GM12878 (cell line): ENCODE measurements at regions of chr3 and their contacts with region 1.

Region 1: GRCh38 chr3:39499651-39500240 is 32.3 kb downstream of the MOBP start:
- DNase-seq: no peak
- ATAC-seq: no peak
- H3K4me3 ChIP-seq: no peak overlapping the region
- H3K27ac ChIP-seq: no peak overlapping the region
- H3K4me1 ChIP-seq: no peaks in the 10 kb centered on the region
- H3K27me3 ChIP-seq: peaks cover 0 to 14% of the 10 kb centered on the region in 2 experiments
- CTCF ChIP-seq: no peak
- EP300 ChIP-seq: no peak
- POLR2A ChIP-seq: no peak
- RAD21 ChIP-seq: no peak

Region 2: GRCh38 chr3:39166134-39166731 is 333.5 kb before region 1 on chr3:
- CTCF ChIA-PET with region 1: no interaction called
- POLR2A ChIA-PET with region 1: no interaction called
- RAD21 ChIA-PET with region 1: no interaction called
- SMC1A ChIA-PET with region 1: no interaction called
- in situ Hi-C with region 1: no loop called
- intact Hi-C with region 1: no loop called
- DNase-seq: no peak
- ATAC-seq: no peak; the same call in none of the 3 replicates
- H3K4me3 ChIP-seq: no peak overlapping the region
- H3K27ac ChIP-seq: no peak overlapping the region
- H3K4me1 ChIP-seq: no peaks in the 10 kb centered on the region
- H3K27me3 ChIP-seq: no peaks in the 10 kb centered on the region; a peak in 1 of 4 replicates
- CTCF ChIP-seq: peak in 1 of 3 experiments; percentile 27; a peak in 2 of 6 replicates
- EP300 ChIP-seq: no peak
- POLR2A ChIP-seq: no peak
- RAD21 ChIP-seq: peak; percentile 39

Region 3: GRCh38 chr3:39414421-39414907 is 85.3 kb before region 1 on chr3:
- CTCF ChIA-PET with region 1: interaction called, 13 read pairs
- POLR2A ChIA-PET with region 1: no interaction called
- RAD21 ChIA-PET with region 1: no interaction called
- SMC1A ChIA-PET with region 1: interaction called, 3 read pairs
- in situ Hi-C with region 1: no loop called
- intact Hi-C with region 1: loop called (anchors 2 kb)
- DNase-seq: no peak
- ATAC-seq: peak; percentile 8
- H3K4me3 ChIP-seq: no peak overlapping the region
- H3K27ac ChIP-seq: no peak overlapping the region
- H3K4me1 ChIP-seq: no peaks in the 10 kb centered on the region
- H3K27me3 ChIP-seq: no peaks in the 10 kb centered on the region
- CTCF ChIP-seq: no peak
- EP300 ChIP-seq: no peak
- POLR2A ChIP-seq: peak; percentile 67
- RAD21 ChIP-seq: no peak

Region 4: GRCh38 chr3:39485547-39485946 is 14.2 kb before region 1 on chr3:
- CTCF ChIA-PET with region 1: interaction called, 16 read pairs
- POLR2A ChIA-PET with region 1: no interaction called
- RAD21 ChIA-PET with region 1: no interaction called
- SMC1A ChIA-PET with region 1: no interaction called
- in situ Hi-C with region 1: no loop called
- intact Hi-C with region 1: no loop called
- DNase-seq: no peak
- ATAC-seq: no peak
- H3K4me3 ChIP-seq: no peak overlapping the region
- H3K27ac ChIP-seq: no peak overlapping the region
- H3K4me1 ChIP-seq: no peaks in the 10 kb centered on the region
- H3K27me3 ChIP-seq: no peaks in the 10 kb centered on the region; a peak in 1 of 4 replicates
- CTCF ChIP-seq: no peak
- EP300 ChIP-seq: no peak
- POLR2A ChIP-seq: no peak
- RAD21 ChIP-seq: no peak